Aorta (tissue), 5 donors: ENCODE measurements at regions of chr12 and their contacts with region 1.

Region 1: GRCh38 chr12:108349278-108349688 is 10.2 kb upstream of the CMKLR1 start:
- DNase-seq: peak; percentile 77 to 83
- ATAC-seq: peak; percentile 89
- H3K4me3 ChIP-seq: no peak overlapping the region
- H3K27ac ChIP-seq: peak overlapping the region; percentile 99
- H3K4me1 ChIP-seq: peaks cover 0 to 3% of the 10 kb centered on the region in 2 donors
- H3K27me3 ChIP-seq: no peaks in the 10 kb centered on the region

Region 2: GRCh38 chr12:108371801-108372344 is 22.6 kb after region 1 on chr12:
- intact Hi-C with region 1: loop called in 1 of 2 experiments (anchors 1 kb)
- DNase-seq: peak in 1 of 2 donors; percentile 76
- ATAC-seq: no peak
- H3K4me3 ChIP-seq: no peak overlapping the region
- H3K27ac ChIP-seq: peak overlapping the region in 1 of 2 donors; percentile 79
- H3K4me1 ChIP-seq: no peaks in the 10 kb centered on the region
- H3K27me3 ChIP-seq: no peaks in the 10 kb centered on the region